HepG2 (cell line): ENCODE measurements at regions of chr9 and their contacts with region 1.

Region 1: GRCh38 chr9:79524266-79524665 is 47.5 kb upstream of the TLE4 start:
- DNase-seq: no peak
- ATAC-seq: no peak
- H3K4me3 ChIP-seq: no peak overlapping the region
- H3K27ac ChIP-seq: no peak overlapping the region
- H3K4me1 ChIP-seq: no peaks in the 10 kb centered on the region
- H3K27me3 ChIP-seq: no peaks in the 10 kb centered on the region
- CTCF ChIP-seq: no peak
- EP300 ChIP-seq: no peak
- POLR2A ChIP-seq: no peak
- RAD21 ChIP-seq: no peak

Region 2: DNA sequence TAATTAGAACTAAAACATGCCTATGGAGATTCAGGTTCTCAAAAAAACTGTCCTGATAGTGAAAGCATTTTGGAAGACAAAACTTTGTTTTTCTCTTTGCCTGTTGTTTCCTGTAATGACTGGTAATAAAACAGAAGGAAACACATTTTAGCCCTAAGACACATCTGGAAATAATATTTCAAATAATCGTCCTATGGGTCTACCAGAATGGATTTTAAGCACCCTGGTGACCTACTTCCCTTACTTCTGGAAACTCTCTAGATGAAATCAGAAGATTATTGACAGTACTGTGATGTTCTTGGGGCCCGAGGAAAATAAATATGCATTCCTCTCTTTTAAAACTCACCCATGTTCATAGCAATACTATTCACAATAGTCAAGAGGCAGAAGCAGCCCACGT is 62.6 kb before region 1 on chr9:
- CTCF ChIA-PET with region 1: no interaction called
- POLR2A ChIA-PET with region 1: no interaction called
- in situ Hi-C with region 1: no loop called
- intact Hi-C with region 1: no loop called
- DNase-seq: no peak
- ATAC-seq: no peak
- H3K4me3 ChIP-seq: no peak overlapping the region
- H3K27ac ChIP-seq: no peak overlapping the region
- H3K4me1 ChIP-seq: no peaks in the 10 kb centered on the region
- H3K27me3 ChIP-seq: no peaks in the 10 kb centered on the region
- CTCF ChIP-seq: no peak
- EP300 ChIP-seq: no peak
- POLR2A ChIP-seq: no peak
- RAD21 ChIP-seq: no peak

Region 3: DNA sequence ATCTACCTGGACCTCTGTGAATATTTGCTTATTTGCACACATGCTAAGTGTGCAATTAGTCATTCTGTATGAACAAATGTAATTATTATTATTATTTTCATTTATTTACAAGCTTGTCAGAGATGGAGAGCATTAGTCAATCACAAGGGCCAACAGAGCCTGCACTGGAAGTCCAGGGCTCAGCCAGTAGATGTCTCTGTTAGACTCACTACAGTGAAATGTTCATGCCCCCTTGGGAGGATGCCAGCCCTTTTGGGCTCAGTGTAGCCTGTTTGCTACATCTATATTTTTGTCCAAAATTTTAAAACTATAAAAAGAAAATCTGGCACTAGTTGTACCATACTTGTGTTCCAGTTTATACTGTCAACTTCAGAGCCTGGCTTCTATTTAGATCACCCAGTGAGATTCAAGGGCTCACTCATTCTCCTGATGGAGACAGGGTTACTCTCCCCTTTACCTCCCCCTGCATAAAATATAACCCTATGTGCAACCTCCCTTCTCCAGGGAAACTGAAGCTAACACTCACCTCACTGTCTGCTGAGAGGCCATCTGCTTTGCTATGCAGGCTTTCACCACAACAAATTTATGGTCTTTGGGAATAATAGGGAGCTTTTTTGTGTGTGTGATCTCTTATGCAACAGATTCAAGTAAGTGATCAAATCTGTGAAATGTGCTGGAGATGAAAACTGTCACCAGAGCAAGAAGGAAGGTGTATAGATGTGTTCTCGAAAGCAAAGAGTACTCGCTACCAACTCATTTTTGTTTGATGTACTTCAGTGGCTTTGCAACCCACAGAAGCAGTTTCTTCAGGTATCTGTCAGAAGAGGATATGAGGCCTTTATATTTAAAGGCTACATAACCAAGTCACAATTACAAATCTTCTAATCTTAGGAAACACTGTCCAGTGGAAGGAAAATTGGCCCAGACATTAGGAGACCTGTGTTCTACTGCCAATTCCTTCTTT is 52.4 kb before region 1 on chr9:
- CTCF ChIA-PET with region 1: no interaction called
- POLR2A ChIA-PET with region 1: no interaction called
- in situ Hi-C with region 1: no loop called
- intact Hi-C with region 1: no loop called
- DNase-seq: no peak
- ATAC-seq: no peak
- H3K4me3 ChIP-seq: no peak overlapping the region
- H3K27ac ChIP-seq: no peak overlapping the region
- H3K4me1 ChIP-seq: no peaks in the 10 kb centered on the region
- H3K27me3 ChIP-seq: no peaks in the 10 kb centered on the region; a peak in 1 of 5 replicates
- CTCF ChIP-seq: 0 out of 2 replicates have a peak, but pooled peaks have one; percentile 8
- EP300 ChIP-seq: no peak
- POLR2A ChIP-seq: no peak
- RAD21 ChIP-seq: no peak

Region 4: DNA sequence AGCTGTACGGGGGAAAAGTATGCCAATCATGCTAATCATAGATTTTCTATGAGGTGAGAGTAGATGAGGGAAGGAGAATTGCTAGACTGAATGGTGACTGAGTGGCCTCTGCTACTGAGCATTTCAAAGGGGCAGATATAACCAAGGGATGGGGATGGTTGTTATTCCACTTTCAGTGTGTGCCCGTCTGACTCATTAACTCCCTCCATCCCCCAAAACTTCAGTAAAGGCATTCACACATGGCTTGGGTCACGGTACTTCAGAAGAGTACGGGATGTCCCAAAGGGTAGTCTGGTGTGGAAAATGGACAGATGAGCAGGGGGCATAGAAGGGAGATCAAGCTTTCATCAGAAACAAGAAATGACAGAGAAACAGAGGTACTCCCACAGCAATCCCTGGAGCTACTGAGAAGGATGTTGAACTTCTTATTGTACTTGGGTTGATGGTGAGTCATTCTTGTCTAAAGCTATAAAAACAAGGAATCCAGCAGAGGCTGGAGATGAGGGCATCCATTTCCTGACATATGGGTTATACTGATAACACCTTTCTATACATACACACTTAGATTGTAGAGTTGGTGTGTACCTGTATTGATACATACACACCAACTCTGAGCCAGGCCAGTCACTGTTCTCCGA is 38.6 kb after region 1 on chr9:
- CTCF ChIA-PET with region 1: no interaction called
- POLR2A ChIA-PET with region 1: no interaction called
- in situ Hi-C with region 1: no loop called
- intact Hi-C with region 1: loop called (anchors 1 kb)
- DNase-seq: no peak
- ATAC-seq: no peak
- H3K4me3 ChIP-seq: no peak overlapping the region
- H3K27ac ChIP-seq: no peak overlapping the region
- H3K4me1 ChIP-seq: no peaks in the 10 kb centered on the region
- H3K27me3 ChIP-seq: peaks cover 0 to 6% of the 10 kb centered on the region in 2 experiments; a peak in 1 of 5 replicates
- CTCF ChIP-seq: no peak
- EP300 ChIP-seq: no peak
- POLR2A ChIP-seq: no peak
- RAD21 ChIP-seq: no peak